ENCODE measurements at regions of chr7 and their contacts with region 1.

Region 1: DNA sequence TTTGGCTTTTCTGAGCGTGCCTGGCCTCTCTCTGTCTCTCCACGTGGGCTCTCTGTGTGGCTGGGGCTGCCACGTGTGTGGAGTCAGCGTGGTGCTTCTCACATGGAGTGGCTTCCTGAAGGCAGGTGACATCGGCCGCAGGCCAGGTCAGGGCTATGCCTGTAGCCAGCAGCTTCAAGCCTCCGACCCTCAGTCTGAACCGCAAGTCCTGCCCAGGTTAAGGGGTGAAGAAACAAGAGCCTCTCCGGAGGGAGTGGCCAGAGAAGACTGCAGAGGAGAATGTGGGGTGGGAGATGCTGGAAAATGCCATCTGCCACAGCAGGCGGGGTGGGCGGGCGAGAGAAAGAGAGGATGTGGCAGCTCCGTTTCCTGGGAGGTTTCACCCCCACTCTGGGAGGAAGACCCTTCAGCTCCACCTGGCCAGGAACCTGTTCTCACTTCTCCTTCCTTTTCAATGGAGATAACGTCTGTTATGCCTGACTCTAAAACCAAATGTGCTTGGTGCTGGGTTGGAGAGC is 14.3 kb upstream of the VIPR2 start:
- DNase-seq: no peak
- ATAC-seq: no peak
- H3K4me3 ChIP-seq: no peak overlapping the region
- H3K27ac ChIP-seq: no peak overlapping the region
- H3K4me1 ChIP-seq: no peaks in the 10 kb centered on the region
- H3K27me3 ChIP-seq: peaks cover 8% of the 10 kb centered on the region; the same call in 1 of the 2 replicates
- CTCF ChIP-seq: no peak
- POLR2A ChIP-seq: no peak
- RAD21 ChIP-seq: no peak

Region 2: GRCh38 chr7:159027691-159028455 is 131.1 kb before region 1 on chr7:
- CTCF ChIA-PET with region 1: no interaction called
- POLR2A ChIA-PET with region 1: no interaction called
- RAD21 ChIA-PET with region 1: no interaction called
- intact Hi-C with region 1: no loop called
- DNase-seq: no peak
- ATAC-seq: no peak
- H3K4me3 ChIP-seq: no peak overlapping the region
- H3K27ac ChIP-seq: no peak overlapping the region
- H3K4me1 ChIP-seq: peaks cover 0 to 17% of the 10 kb centered on the region in 2 experiments; a peak in 1 of 4 replicates
- H3K27me3 ChIP-seq: no peaks in the 10 kb centered on the region
- CTCF ChIP-seq: no peak
- POLR2A ChIP-seq: no peak
- RAD21 ChIP-seq: no peak

Region 3: DNA sequence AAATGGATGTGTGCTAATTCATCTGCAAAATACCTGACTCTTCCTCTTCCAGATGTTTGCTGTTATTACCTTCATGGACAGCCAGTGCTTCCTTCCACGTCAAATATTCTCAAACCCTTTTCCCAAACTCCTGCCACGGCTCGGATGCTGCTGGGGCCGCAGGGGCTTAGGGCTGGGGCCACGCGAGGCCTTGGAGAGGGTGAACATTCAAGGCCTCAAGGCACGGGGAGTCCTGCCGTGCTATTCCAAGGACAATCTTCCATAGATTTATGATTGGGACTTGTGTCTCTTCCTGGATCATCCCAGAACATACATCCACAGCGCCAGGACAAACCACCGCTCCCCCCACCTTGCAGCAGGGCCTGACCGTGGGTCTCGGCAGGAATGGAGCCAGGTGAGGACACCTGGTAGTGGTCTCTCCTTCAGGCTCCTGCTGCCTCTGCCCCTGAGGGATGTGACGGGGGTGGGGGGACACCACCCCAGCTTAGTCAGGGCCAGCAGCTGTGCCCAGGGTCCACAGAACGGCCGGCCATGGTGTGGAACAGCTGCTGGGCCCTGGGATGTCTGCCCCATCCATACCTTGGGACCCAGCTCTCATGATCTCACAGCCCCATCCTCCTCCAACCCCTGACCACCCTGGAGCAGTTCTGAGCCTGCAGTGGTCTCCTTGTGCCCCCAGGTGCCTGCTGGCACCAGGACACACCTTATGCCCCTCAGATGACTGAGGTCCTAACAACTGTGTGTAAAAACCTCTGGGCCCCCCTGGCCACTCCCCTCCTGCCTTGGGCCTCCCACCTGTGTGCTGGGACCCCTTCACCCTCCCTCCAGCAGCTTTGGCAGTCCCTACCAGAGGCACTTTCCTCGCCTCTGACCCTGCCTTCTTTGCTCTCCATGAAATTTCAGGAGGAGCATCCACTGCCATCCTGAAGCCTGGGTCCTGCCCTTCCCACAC is 31.0 kb before region 1 on chr7:
- CTCF ChIA-PET with region 1: no interaction called
- POLR2A ChIA-PET with region 1: no interaction called
- RAD21 ChIA-PET with region 1: no interaction called
- intact Hi-C with region 1: loop called (anchors 1 kb)
- DNase-seq: no peak
- ATAC-seq: no peak
- H3K4me3 ChIP-seq: no peak overlapping the region
- H3K27ac ChIP-seq: no peak overlapping the region
- H3K4me1 ChIP-seq: no peaks in the 10 kb centered on the region
- H3K27me3 ChIP-seq: peaks cover 32% of the 10 kb centered on the region
- CTCF ChIP-seq: no peak
- POLR2A ChIP-seq: no peak
- RAD21 ChIP-seq: no peak

Measured in HCT116 (cell line).